ENCODE measurements at regions of chr7 and their contacts with region 1.

Region 1: DNA sequence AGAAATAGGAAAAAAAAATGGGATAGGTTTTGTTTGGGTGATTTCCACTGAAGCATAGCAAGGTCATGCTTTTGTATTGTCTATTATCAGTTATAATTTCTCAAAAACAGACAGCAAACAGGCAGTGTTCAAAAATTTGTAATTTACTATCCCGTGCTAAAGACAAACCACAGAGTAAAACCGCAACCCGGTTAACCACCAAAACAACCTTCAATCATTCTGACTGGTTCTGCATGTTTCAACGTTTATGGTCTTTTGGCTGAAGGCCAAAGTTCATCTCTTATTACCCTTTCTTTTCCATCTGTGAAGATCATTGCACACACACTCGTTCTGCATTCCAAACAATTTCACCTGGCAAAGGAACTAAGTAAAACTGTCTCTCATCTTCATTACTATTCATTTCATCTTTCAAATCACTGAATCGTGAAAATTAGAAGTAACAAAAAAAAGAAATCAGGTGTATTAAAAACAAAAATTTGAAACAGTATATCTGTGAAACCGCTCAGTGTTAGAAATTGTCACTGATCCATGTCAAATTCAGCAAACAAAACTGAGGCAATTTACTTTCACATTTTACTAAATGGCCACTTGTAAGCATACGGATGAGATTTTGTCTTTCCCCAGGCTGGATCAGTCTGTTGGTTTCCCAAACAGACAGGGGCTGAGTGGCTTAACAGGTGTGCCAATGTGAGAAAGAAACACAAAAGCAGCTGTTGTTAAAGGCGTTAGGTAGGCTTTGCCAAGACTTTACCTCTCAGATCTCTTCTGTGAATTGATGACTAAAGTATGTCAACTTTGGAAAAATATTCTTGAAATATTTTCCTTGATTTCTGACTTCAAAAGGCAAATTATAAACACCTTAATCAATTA is 539.6 kb downstream of the CNTNAP2 start:
- DNase-seq: no peak
- H3K4me3 ChIP-seq: no peak overlapping the region
- CTCF ChIP-seq: no peak
- POLR2A ChIP-seq: no peak

Region 2: DNA sequence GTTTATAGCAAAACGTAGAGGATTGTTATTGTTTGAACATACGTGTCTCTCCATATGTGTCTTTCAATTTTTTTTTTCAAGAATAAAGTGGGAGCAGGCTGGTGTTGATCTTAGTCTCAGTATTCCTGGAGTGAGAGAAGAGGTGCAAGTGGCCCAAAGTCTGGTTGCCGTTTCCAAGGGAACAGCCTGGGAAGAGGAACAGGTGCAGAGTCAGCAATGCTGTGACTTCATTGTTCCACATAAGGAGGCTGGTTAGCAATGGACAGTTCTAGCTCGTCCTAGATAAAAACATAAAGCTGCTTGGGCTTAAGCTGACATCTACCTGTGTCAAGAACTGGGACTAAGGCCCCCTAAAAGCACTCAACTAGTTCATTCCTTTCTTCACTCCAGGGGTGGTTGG is 1193.7 kb before region 1 on chr7:
- intact Hi-C with region 1: loop called (anchors 10 kb)
- DNase-seq: no peak
- H3K4me3 ChIP-seq: no peak overlapping the region
- CTCF ChIP-seq: no peak
- POLR2A ChIP-seq: no peak

Region 3: DNA sequence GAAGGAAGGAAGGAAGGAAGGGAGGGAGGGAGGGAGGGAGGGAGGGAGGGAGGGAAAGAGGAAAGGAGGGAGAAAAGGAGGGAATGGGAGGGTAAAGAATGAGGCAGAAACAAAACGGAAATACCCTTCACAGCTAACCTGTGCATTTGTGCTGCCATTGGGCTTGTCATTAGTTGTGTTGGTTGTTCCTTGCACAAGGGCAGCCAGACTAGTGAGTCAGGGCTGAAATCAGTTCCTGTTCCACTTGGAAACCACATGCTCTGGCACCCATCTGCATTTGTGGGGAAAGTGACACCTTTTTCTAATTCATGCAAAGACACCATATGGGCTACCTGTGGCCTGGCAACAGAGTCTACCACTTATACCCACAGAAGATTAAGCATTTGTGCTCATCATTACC is 930.4 kb after region 1 on chr7:
- intact Hi-C with region 1: no loop called
- DNase-seq: no peak
- H3K4me3 ChIP-seq: no peak overlapping the region
- CTCF ChIP-seq: no peak
- POLR2A ChIP-seq: no peak

Measured in lower leg skin (tissue), 4 donors.